Activated T-helper 2 cell treated with anti-CD3 and anti-CD28 coated beads, Interferon-gamma antibody, Interleukin-2, Interleukin-4, amounts not matched to agents 10 μg/mL and 5 μg/mL and 100 μg/mL, durations not matched to agents 14 hours and 24 hours and 36 hours (primary cell): ENCODE measurements at regions of chr10 and their contacts with region 1.

Region 1: GRCh38 chr10:7239312-7239985 is 171.4 kb downstream of the SFMBT2 start:
- DNase-seq: no peak
- H3K4me3 Mint-ChIP-seq: no peak overlapping the region
- H3K27ac Mint-ChIP-seq: peak overlapping the region; percentile 13
- H3K4me1 Mint-ChIP-seq: peaks cover 40% of the 10 kb centered on the region
- H3K27me3 Mint-ChIP-seq: no peaks in the 10 kb centered on the region

Region 2: DNA sequence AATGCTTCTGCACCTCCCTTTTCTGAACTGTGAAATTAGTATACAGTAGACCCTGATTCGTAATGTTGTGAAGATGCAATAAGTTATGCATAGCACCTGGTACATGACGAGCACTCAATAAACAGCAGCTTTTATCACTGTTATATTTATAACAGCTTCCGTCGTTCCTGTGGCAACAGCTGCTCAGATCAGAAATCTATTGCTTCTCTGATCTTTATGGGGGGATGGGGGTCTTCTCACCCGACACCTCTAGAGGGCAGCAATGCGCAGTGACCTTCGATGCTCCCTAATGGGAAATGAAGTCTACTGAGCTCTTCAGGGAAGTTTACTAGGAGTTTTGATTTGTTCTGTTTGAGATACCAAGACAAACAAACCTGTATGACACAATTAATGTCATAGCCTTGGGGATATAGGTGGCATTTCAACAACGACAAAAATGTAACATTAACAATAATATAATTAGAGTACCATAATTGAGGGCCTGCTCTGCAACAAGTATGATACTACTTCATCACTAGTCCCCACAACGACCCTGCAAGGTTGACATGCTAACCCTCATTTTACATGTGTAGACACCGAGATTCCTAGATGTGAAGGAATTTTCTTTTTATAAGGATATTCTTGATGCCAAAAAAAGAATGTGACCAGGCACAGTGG is 118.2 kb before region 1 on chr10:
- intact Hi-C with region 1: loop called (anchors 10 kb)
- DNase-seq: peak; percentile 43
- H3K4me3 Mint-ChIP-seq: no peak overlapping the region
- H3K27ac Mint-ChIP-seq: no peak overlapping the region
- H3K4me1 Mint-ChIP-seq: peaks cover 4% of the 10 kb centered on the region
- H3K27me3 Mint-ChIP-seq: peaks cover 48% of the 10 kb centered on the region

Region 3: DNA sequence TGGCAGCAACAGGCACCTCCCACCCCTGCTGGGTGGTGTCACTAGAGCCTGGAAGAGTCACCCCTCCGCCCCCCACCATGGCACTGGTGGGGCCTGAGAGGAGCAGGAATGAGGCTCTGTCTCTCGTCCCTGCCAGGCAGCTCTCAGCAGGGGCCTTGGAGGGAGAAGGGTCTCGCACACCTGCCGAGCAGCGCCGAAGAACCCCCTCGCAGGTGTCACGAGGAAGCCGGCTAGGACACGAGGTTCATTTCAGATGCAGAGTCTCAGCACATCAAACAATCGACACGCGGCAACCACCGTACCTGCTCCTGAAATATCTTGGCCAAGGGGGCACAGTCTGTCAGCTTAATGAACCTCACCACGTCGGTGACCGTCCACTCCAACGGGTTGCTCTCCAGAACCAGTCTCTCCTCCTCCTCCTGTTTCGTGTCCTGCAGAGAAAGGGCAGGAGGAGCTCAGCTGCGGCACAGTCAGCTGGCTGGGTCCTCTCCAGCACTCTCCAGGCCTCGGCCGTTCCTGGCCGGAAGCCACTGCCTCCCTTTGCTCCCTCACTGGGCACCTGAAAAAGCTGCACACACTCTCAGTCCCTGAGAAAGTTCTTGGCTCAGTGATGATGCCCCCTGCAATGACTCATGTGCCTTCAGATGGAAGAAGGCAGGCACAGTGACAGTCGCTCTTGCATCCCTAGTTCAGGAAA is 68.7 kb before region 1 on chr10:
- intact Hi-C with region 1: no loop called
- DNase-seq: no peak
- H3K4me3 Mint-ChIP-seq: no peak overlapping the region
- H3K27ac Mint-ChIP-seq: no peak overlapping the region
- H3K4me1 Mint-ChIP-seq: no peaks in the 10 kb centered on the region
- H3K27me3 Mint-ChIP-seq: no peaks in the 10 kb centered on the region

Region 4: GRCh38 chr10:7192831-7193361 is 46.6 kb before region 1 on chr10:
- intact Hi-C with region 1: loop called (anchors 1 kb)
- DNase-seq: peak; percentile 62
- H3K4me3 Mint-ChIP-seq: peak overlapping the region; percentile 58
- H3K27ac Mint-ChIP-seq: peak overlapping the region; percentile 97
- H3K4me1 Mint-ChIP-seq: peaks cover 59% of the 10 kb centered on the region
- H3K27me3 Mint-ChIP-seq: no peaks in the 10 kb centered on the region

Region 5: DNA sequence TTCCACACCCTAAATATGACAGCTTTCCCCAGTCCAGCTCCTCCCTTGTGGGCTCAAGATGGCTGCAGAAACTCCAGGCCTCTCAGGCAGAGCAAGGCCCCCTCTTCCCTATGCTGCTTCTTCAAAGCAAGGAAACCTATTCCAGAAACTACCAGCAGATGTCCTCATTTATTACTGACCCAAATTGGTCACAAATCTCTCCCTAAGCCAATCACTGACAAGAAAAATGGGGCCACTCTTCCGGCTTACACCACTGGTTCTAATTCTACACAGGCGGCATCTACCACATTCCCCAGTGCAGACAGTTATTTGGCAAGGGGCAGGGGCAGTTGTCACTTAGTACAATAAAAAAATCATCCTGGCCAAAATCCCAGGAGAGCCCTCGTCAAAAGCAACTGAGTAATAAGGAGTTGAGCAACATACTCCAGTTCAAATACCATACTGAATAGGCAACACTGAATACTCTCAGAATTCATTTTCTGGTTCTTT is 21.0 kb after region 1 on chr10:
- intact Hi-C with region 1: loop called (anchors 1 kb)
- DNase-seq: no peak
- H3K4me3 Mint-ChIP-seq: peak overlapping the region; percentile 40
- H3K27ac Mint-ChIP-seq: peak overlapping the region; percentile 62
- H3K4me1 Mint-ChIP-seq: peaks cover 54% of the 10 kb centered on the region
- H3K27me3 Mint-ChIP-seq: no peaks in the 10 kb centered on the region